Natural killer cell (primary cell): ENCODE measurements at regions of chr3 and their contacts with region 1.

Region 1: DNA sequence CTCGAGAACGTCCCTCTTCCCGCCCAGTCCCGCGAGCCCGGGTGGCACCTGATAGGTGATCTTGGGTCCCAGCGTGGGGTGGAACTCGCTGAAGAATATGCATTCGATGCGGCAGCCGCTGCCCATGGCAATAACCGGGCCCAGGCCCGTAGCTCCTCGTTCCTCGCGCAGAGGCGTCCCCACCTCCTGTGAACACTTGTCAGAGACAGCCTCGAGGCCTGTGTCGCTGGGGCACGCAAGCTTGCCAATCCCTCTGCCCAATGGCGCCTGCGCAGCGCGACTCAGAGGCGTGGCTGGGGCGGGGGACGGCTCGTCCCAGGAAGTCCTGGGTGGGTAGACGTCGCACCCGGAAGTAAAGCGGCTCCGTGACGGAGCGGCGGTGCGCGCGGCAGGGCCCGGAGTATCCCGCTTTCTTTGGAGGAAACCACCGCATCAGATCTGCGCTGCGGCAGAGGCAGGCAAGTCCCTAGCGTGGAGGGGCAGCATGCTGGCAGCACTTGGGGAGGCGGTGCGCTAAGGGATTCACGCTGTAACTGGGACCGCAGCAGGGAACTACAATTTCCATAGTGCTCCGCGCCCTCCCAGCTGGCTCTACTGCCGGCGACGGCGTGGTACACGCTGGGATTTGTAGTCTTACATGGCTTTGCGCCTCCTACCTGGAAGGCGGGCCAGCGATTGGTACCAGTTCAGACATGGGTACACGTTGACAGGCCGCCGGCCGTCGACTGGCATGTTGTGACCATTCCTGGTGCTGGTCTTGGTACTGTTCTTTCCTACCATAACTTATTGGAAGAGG is at the starts of genes CYB561D2 and NPRL2:
- DNase-seq: peak; percentile 97 to 99
- ATAC-seq: peak; percentile 87 to 95 (median 88)
- H3K4me3 ChIP-seq: peak within 1 kb of the TSS; percentile 86
- H3K4me3 Mint-ChIP-seq: peak within 1 kb of the TSS; percentile 96
- H3K27ac ChIP-seq: peak within 1 kb of the TSS; percentile 90
- H3K27ac Mint-ChIP-seq: peak within 1 kb of the TSS; percentile 96 to 98
- H3K4me1 ChIP-seq: peaks cover 64% of the 10 kb centered on the region
- H3K4me1 Mint-ChIP-seq: peaks cover 36 to 68% of the 10 kb centered on the region in 2 donors
- H3K27me3 ChIP-seq: no peaks in the 10 kb centered on the region
- H3K27me3 Mint-ChIP-seq: no peaks in the 10 kb centered on the region
- CTCF ChIP-seq: no peak
- total RNA-seq, gene CYB561D2: 39.6 to 54.0 (median 50.5) TPM
- total RNA-seq, gene NPRL2: 78.9 to 87.6 (median 80.9) TPM

Region 2: GRCh38 chr3:50542177-50543034 is 191.7 kb after region 1 on chr3:
- intact Hi-C with region 1: loop called (anchors 1 kb)
- DNase-seq: peak; percentile 63 to 81
- ATAC-seq: peak; percentile 51 to 86 (median 77)
- H3K4me3 ChIP-seq: no peak overlapping the region
- H3K4me3 Mint-ChIP-seq: no peak overlapping the region
- H3K27ac ChIP-seq: no peak overlapping the region
- H3K27ac Mint-ChIP-seq: no peak overlapping the region
- H3K4me1 ChIP-seq: peaks cover 24% of the 10 kb centered on the region
- H3K4me1 Mint-ChIP-seq: peaks cover 15 to 41% of the 10 kb centered on the region in 2 donors
- H3K27me3 ChIP-seq: no peaks in the 10 kb centered on the region
- H3K27me3 Mint-ChIP-seq: peaks cover 3 to 11% of the 10 kb centered on the region in 2 donors
- CTCF ChIP-seq: peak; percentile 91

Region 3: GRCh38 chr3:50550079-50550741 is 199.5 kb after region 1 on chr3:
- intact Hi-C with region 1: loop called (anchors 1 kb)
- DNase-seq: peak; percentile 75 to 79
- ATAC-seq: peak; percentile 60 to 80 (median 79)
- H3K4me3 ChIP-seq: no peak overlapping the region
- H3K4me3 Mint-ChIP-seq: no peak overlapping the region
- H3K27ac ChIP-seq: no peak overlapping the region
- H3K27ac Mint-ChIP-seq: peak overlapping the region in 1 of 2 donors; percentile 58
- H3K4me1 ChIP-seq: peaks cover 23% of the 10 kb centered on the region
- H3K4me1 Mint-ChIP-seq: peaks cover 9 to 33% of the 10 kb centered on the region in 2 donors
- H3K27me3 ChIP-seq: no peaks in the 10 kb centered on the region
- H3K27me3 Mint-ChIP-seq: no peaks in the 10 kb centered on the region
- CTCF ChIP-seq: peak; percentile 89

Region 4: DNA sequence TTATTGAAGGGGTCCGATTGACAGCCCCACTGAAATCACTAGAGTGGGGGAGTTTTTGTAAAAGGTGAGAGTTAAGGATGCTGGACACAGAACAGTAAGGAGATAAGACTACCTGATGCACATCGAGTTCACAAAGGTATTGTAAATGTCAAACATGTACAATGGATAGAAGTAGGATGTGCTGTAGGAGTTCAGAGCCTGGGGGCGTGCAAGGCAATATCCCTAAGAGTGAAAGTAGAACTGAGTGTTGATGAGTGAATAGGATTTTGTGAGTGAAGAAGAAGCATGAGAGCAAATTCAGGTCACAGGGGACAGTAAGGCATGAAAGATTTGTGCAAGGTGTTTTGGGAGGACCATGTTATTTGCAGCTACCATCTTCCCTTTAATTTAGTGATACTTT is 345.6 kb after region 1 on chr3:
- intact Hi-C with region 1: no loop called
- DNase-seq: no peak
- ATAC-seq: no peak
- H3K4me3 ChIP-seq: no peak overlapping the region
- H3K4me3 Mint-ChIP-seq: no peak overlapping the region
- H3K27ac ChIP-seq: no peak overlapping the region
- H3K27ac Mint-ChIP-seq: no peak overlapping the region
- H3K4me1 ChIP-seq: no peaks in the 10 kb centered on the region
- H3K4me1 Mint-ChIP-seq: peaks cover 0 to 5% of the 10 kb centered on the region in 2 donors
- H3K27me3 ChIP-seq: no peaks in the 10 kb centered on the region
- H3K27me3 Mint-ChIP-seq: peaks cover 6 to 12% of the 10 kb centered on the region in 2 donors
- CTCF ChIP-seq: no peak